K562 (cell line): ENCODE measurements at regions of chr19 and their contacts with region 1.

Region 1: GRCh38 chr19:47305309-47305751 is 4.3 kb upstream of the C5AR1 start:
- DNase-seq: peak; percentile 70 to 83 (median 76)
- ATAC-seq: peak; percentile 77
- H3K4me3 ChIP-seq: no peak overlapping the region
- H3K27ac ChIP-seq: no peak overlapping the region
- H3K4me1 ChIP-seq: peaks cover 2 to 10% of the 10 kb centered on the region in 2 experiments; a peak in 3 of 5 replicates
- H3K27me3 ChIP-seq: no peaks in the 10 kb centered on the region
- CTCF ChIP-seq: peak; percentile 84 to 97 (median 89)
- EP300 ChIP-seq: no peak
- POLR2A ChIP-seq: no peak
- RAD21 ChIP-seq: peak; percentile 53 to 65

Region 2: GRCh38 chr19:47348819-47349795 is 43.8 kb after region 1 on chr19 and contains the start of gene DHX34:
- CTCF ChIA-PET with region 1: no interaction called
- POLR2A ChIA-PET with region 1: interaction called, 3 read pairs
- in situ Hi-C with region 1: no loop called
- intact Hi-C with region 1: loop called (anchors 5 kb)
- DNase-seq: peak; percentile 99 to 100 (median 100)
- ATAC-seq: peak; percentile 98
- H3K4me3 ChIP-seq: peak within 1 kb of the TSS; percentile 77
- H3K27ac ChIP-seq: peak within 1 kb of the TSS; percentile 82
- H3K4me1 ChIP-seq: peaks cover 26 to 32% of the 10 kb centered on the region in 2 experiments
- H3K27me3 ChIP-seq: no peaks in the 10 kb centered on the region
- CTCF ChIP-seq: peak; percentile 93 to 99 (median 98)
- EP300 ChIP-seq: peak; percentile 20; the same call in 1 of the 2 replicates
- POLR2A ChIP-seq: peak; percentile 92
- RAD21 ChIP-seq: peak; percentile 31 to 40; a peak in 2 of 4 replicates
- polyA plus RNA-seq, gene DHX34: 0.36 to 0.41 TPM

Region 3: GRCh38 chr19:47391510-47392223 is 86.3 kb after region 1 on chr19:
- CTCF ChIA-PET with region 1: interaction called, 9 read pairs
- POLR2A ChIA-PET with region 1: no interaction called
- in situ Hi-C with region 1: no loop called
- intact Hi-C with region 1: loop called (anchors 2 kb)
- DNase-seq: peak; percentile 76 to 85 (median 83)
- ATAC-seq: peak; percentile 96
- H3K4me3 ChIP-seq: no peak overlapping the region
- H3K27ac ChIP-seq: no peak overlapping the region
- H3K4me1 ChIP-seq: no peaks in the 10 kb centered on the region; a peak in 1 of 5 replicates
- H3K27me3 ChIP-seq: peaks cover 8 to 13% of the 10 kb centered on the region in 2 experiments; a peak in 4 of 5 replicates
- CTCF ChIP-seq: peak; percentile 88 to 94 (median 93)
- EP300 ChIP-seq: no peak
- POLR2A ChIP-seq: no peak
- RAD21 ChIP-seq: peak; percentile 78 to 90